PC-9 (cell line): ENCODE measurements at regions of chr15 and their contacts with region 1.

Region 1: GRCh38 chr15:40857601-40858341 is 13.9 kb downstream of the SPINT1 start:
- DNase-seq: peak; percentile 85 to 95
- H3K4me3 ChIP-seq: no peak overlapping the region
- H3K27ac ChIP-seq: peak overlapping the region; percentile 89
- H3K4me1 ChIP-seq: peaks cover 36% of the 10 kb centered on the region
- H3K27me3 ChIP-seq: no peaks in the 10 kb centered on the region
- CTCF ChIP-seq: peak; percentile 87

Region 2: GRCh38 chr15:40660686-40661085 is 197.1 kb before region 1 on chr15:
- CTCF ChIA-PET with region 1: no interaction called
- POLR2A ChIA-PET with region 1: no interaction called
- intact Hi-C with region 1: no loop called
- DNase-seq: no peak
- H3K4me3 ChIP-seq: no peak overlapping the region
- H3K27ac ChIP-seq: no peak overlapping the region
- H3K4me1 ChIP-seq: no peaks in the 10 kb centered on the region
- H3K27me3 ChIP-seq: no peaks in the 10 kb centered on the region
- CTCF ChIP-seq: no peak

Region 3: GRCh38 chr15:40694688-40695468 is 162.9 kb before region 1 on chr15 and contains the start of gene RAD51:
- CTCF ChIA-PET with region 1: interaction called, 12 read pairs
- POLR2A ChIA-PET with region 1: interaction called, 10 read pairs
- intact Hi-C with region 1: no loop called
- DNase-seq: peak; percentile 83 to 90
- H3K4me3 ChIP-seq: peak within 1 kb of the TSS; percentile 88
- H3K27ac ChIP-seq: peak within 1 kb of the TSS; percentile 78
- H3K4me1 ChIP-seq: peaks cover 19% of the 10 kb centered on the region
- H3K27me3 ChIP-seq: no peaks in the 10 kb centered on the region
- CTCF ChIP-seq: no peak
- total RNA-seq, gene RAD51: 19.8 and 22.5 TPM in 2 replicates

Region 4: DNA sequence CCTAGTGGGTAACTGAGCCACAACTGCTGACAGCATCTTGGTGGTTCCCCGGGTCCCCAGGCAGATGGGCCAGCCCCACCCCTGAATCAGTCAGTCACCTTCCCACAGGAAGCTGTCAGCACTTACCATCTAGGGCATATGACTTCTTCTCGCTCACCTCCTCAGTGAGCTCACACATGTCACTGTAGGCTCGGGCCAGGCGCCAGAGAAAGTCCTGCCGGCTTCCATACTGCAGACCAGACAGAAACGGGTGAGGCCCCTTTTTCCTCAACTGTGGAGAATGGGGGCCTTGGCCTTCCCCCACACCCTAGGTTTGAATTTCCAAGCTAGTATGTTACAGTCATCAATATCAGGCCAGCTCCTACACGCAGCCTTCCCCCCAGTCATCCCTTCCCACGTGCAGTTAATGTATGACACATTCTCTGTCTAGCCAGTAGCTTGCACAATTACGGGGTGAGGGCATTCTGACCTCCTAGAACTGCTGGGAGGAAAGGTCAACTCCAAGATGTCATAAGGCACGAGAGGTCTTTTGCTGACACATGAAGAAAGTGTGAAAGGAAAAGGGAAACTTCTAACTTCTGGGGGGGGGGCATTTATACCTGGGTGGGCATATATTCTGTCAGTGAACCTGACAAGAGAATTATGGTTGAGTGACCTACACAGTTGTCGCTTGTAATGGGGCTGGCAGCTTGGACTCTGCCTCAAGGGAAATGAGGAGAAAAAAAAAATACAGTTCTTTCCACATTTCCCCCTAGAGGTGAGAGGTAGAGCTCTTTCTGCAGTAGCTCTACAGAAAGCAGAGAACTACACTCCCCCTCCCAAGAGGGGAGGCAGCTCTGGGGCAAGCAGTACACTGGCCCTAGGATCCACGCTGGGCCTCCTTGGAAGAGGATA is 113.6 kb before region 1 on chr15:
- CTCF ChIA-PET with region 1: no interaction called
- POLR2A ChIA-PET with region 1: no interaction called
- intact Hi-C with region 1: loop called (anchors 1 kb)
- DNase-seq: no peak
- H3K4me3 ChIP-seq: no peak overlapping the region
- H3K27ac ChIP-seq: no peak overlapping the region
- H3K4me1 ChIP-seq: no peaks in the 10 kb centered on the region
- H3K27me3 ChIP-seq: no peaks in the 10 kb centered on the region
- CTCF ChIP-seq: no peak

Region 5: GRCh38 chr15:40776522-40777137 is 81.1 kb before region 1 on chr15:
- CTCF ChIA-PET with region 1: interaction called, 13 read pairs
- POLR2A ChIA-PET with region 1: interaction called, 11 read pairs
- intact Hi-C with region 1: no loop called
- DNase-seq: peak; percentile 89
- H3K4me3 ChIP-seq: no peak overlapping the region
- H3K27ac ChIP-seq: peak overlapping the region; percentile 79
- H3K4me1 ChIP-seq: peaks cover 21% of the 10 kb centered on the region
- H3K27me3 ChIP-seq: no peaks in the 10 kb centered on the region
- CTCF ChIP-seq: no peak

Region 6: GRCh38 chr15:40847205-40847961 is 10.4 kb before region 1 on chr15:
- CTCF ChIA-PET with region 1: interaction called, 7 read pairs
- POLR2A ChIA-PET with region 1: interaction called, 8 read pairs
- intact Hi-C with region 1: loop called (anchors 1 kb)
- DNase-seq: peak; percentile 72 to 77
- H3K4me3 ChIP-seq: peak overlapping the region; percentile 71; the same call in 1 of the 2 replicates
- H3K27ac ChIP-seq: peak overlapping the region; percentile 93
- H3K4me1 ChIP-seq: peaks cover 31% of the 10 kb centered on the region
- H3K27me3 ChIP-seq: no peaks in the 10 kb centered on the region
- CTCF ChIP-seq: no peak

Region 7: DNA sequence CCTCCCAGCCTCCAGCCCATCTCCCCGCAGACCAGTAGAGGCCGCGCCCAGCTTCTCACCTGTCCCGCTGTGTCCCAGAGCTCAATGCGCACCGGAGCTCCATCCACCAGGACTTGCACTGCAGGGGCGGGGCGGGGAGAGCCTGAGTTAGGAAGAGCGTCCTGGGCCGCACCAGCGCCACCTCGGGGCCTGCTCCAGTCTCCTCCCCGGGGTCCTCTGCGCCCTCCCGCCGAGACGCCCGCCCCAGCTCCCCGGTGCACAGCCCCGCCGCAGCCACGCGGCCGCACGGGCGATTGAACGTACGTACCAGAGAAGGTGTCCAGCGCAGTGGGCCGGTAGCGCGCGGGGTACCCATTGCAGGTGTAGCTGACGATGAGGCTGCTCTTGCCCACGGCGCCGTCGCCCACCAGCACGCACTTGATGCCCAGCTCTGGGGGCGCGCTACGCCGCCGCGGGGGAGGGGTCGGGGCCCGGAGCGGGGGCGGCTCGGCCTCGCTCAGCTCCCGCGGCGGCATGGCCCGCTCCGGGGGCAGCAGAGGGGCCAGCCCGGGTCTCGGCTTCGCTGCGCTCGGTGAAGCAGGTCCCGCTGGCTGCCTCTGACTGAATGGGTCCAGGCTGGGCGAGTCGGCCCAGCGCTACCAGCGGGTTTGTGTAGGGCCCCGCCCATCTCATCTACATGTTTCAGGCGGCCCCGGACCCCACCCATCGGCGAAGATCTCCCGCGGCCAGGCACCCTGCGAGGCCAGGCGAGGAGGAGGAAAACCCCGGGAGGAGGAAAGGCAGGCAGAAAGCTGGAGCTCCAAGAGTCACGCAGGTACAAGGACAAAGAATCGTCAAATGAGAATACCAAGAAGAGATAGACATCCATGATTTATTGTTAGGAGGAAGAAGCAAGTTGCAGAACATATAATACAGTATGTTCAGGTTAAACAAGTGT is 16.1 kb after region 1 on chr15 and contains the start of gene RHOV:
- CTCF ChIA-PET with region 1: interaction called, 61 read pairs
- POLR2A ChIA-PET with region 1: interaction called, 15 read pairs
- intact Hi-C with region 1: loop called (anchors 1 kb)
- DNase-seq: peak; percentile 70 to 78
- H3K4me3 ChIP-seq: peak within 1 kb of the TSS; percentile 81
- H3K27ac ChIP-seq: peak within 1 kb of the TSS; percentile 91
- H3K4me1 ChIP-seq: peaks cover 52% of the 10 kb centered on the region
- H3K27me3 ChIP-seq: no peaks in the 10 kb centered on the region
- CTCF ChIP-seq: peak; percentile 42; the same call in 1 of the 2 replicates
- total RNA-seq, gene RHOV: 1.4 and 4.1 TPM in 2 replicates

Region 8: GRCh38 chr15:41085029-41085428 is 227.3 kb after region 1 on chr15:
- CTCF ChIA-PET with region 1: interaction called, 13 read pairs
- POLR2A ChIA-PET with region 1: no interaction called
- intact Hi-C with region 1: no loop called
- DNase-seq: no peak
- H3K4me3 ChIP-seq: no peak overlapping the region
- H3K27ac ChIP-seq: no peak overlapping the region
- H3K4me1 ChIP-seq: no peaks in the 10 kb centered on the region
- H3K27me3 ChIP-seq: no peaks in the 10 kb centered on the region
- CTCF ChIP-seq: no peak